ENCODE measurements at regions of chr4 and their contacts with region 1.

Region 1: DNA sequence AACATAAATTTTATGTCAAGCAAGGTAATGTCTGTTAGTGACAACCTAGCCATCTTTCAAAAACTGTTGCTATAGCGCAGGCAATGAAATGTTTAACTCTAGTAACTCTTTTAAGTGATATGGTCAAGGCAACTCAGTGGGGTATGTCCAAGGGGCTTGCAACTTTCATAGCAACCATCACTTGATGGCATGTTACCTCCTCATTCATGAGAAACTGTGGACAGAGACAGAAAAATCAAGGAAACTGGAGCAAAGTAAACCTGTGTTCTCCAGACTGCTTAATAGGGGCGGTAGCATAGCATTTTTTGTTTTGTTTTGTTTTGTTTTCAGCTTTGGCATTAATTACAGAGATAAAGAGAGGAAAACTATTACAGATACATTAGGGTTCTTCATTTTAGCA is 1456.8 kb upstream of the AGA start:
- DNase-seq: no peak
- H3K4me3 ChIP-seq: no peak overlapping the region
- H3K27ac ChIP-seq: no peak overlapping the region
- H3K4me1 ChIP-seq: no peaks in the 10 kb centered on the region
- H3K27me3 ChIP-seq: no peaks in the 10 kb centered on the region
- CTCF ChIP-seq: no peak

Region 2: DNA sequence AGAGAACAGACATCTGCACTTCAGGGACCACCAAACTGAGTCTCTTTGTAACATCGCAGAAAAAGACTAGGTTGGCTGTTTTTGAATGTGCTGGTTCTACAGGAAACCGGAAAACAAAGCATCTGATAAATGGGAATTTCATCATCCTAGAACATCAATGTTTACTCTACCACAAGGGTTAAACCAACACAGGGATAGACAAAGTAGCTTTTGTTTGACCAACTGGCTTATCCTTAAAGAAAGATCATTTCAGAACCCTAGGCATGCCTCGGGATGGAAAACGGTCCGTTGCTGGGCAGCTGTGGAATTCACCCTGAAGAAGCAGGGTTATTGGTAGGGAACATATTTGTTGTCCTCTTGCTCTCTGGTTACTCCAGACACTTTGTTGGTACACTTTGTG is 898.7 kb after region 1 on chr4:
- CTCF ChIA-PET with region 1: no interaction called
- POLR2A ChIA-PET with region 1: no interaction called
- intact Hi-C with region 1: no loop called
- DNase-seq: no peak
- H3K4me3 ChIP-seq: no peak overlapping the region
- H3K27ac ChIP-seq: no peak overlapping the region
- H3K4me1 ChIP-seq: no peaks in the 10 kb centered on the region
- H3K27me3 ChIP-seq: no peaks in the 10 kb centered on the region
- CTCF ChIP-seq: no peak

Region 3: DNA sequence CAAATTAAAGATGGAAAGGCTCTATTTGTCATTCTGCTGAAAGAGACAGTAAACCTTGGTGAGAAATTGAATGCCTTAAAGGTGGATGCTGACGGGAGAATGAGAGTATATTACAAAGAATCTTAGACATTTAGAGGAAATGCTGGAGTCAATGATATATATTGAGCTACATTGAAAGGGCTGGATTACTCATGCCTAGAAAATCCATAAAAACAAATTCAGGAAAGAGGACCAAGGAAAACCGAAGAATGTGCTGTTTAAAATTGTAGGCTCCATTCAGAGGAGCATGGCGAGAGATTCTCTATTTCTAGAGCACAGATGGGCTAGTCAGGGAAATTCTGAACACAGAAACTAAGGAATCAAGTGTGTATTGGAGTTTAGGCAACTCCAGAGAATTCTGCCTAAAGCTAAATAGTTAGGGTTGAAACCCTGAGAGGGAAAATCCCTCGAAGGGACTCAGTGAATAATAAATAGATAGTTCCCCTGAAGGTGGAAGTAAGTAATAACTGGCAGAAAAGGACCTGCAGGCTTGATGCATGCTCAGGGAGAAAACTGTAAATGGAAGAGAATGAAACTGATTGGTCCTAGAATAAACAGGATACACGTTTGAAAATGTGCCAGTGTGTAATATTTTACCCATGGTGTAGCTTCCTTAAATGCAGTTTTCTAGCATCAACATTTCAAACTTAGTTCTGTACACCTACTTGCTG is 1811.7 kb after region 1 on chr4:
- CTCF ChIA-PET with region 1: no interaction called
- POLR2A ChIA-PET with region 1: interaction called, 12 read pairs
- intact Hi-C with region 1: no loop called
- DNase-seq: no peak
- H3K4me3 ChIP-seq: no peak overlapping the region
- H3K27ac ChIP-seq: no peak overlapping the region
- H3K4me1 ChIP-seq: no peaks in the 10 kb centered on the region
- H3K27me3 ChIP-seq: no peaks in the 10 kb centered on the region
- CTCF ChIP-seq: no peak

Measured in PC-9 (cell line).